Lower leg skin (tissue), 4 donors: ENCODE measurements at regions of chr18 and their contacts with region 1.

Region 1: DNA sequence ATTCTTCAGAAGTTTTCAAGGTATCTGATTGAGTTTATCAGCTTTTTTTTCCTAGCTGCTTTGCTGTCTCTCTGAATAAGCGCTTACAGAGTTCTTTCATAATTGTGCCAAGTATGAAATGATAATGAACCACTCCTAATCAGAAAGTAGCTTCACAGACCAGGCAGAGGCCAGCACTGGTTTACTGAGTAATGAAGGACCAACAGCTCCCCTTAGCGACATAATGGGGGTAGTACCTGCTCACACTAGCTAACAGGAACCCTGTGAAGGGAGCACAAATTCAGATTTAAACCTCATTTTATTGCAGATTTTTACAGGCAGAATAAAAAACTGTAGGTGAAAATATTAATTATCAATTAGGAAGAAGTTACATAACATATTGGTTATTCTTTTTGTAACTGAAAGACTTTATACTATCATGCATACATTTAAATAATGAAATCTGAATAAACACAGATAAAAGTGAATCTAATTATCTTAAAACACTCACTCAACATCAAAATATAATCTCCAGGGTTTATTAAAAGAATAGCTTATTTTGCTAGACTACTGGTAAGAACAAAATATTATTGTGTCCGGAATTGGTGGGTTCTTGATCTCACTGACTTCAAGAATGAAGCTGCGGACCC is 53.7 kb upstream of the LRRC30 start:
- DNase-seq: peak in 1 of 2 donors; percentile 42
- H3K4me3 ChIP-seq: no peak overlapping the region
- CTCF ChIP-seq: peak in 1 of 3 donors; percentile 36
- POLR2A ChIP-seq: no peak

Region 2: GRCh38 chr18:5806860-5807259 is 1370.4 kb before region 1 on chr18:
- intact Hi-C with region 1: no loop called
- DNase-seq: no peak
- H3K4me3 ChIP-seq: no peak overlapping the region
- CTCF ChIP-seq: no peak
- POLR2A ChIP-seq: no peak

Region 3: GRCh38 chr18:6929370-6930102 is 247.7 kb before region 1 on chr18:
- intact Hi-C with region 1: loop called (anchors 5 kb)
- DNase-seq: no peak
- H3K4me3 ChIP-seq: no peak overlapping the region
- CTCF ChIP-seq: no peak
- POLR2A ChIP-seq: no peak